Astrocyte of the cerebellum (primary cell): ENCODE measurements at regions of chr12 and their contacts with region 1.

Region 1: GRCh38 chr12:58540480-58541299 is 379.6 kb downstream of the LRIG3 start:
- DNase-seq: peak; percentile 79
- H3K4me3 ChIP-seq: no peak overlapping the region
- CTCF ChIP-seq: peak; percentile 89

Region 2: GRCh38 chr12:58364389-58365086 is 176.2 kb before region 1 on chr12:
- in situ Hi-C with region 1: loop called (anchors 25 kb)
- DNase-seq: peak; percentile 99
- H3K4me3 ChIP-seq: no peak overlapping the region
- CTCF ChIP-seq: no peak

Region 3: GRCh38 chr12:58435647-58436046 is 105.0 kb before region 1 on chr12:
- in situ Hi-C with region 1: no loop called
- DNase-seq: no peak
- H3K4me3 ChIP-seq: no peak overlapping the region
- CTCF ChIP-seq: no peak

Region 4: DNA sequence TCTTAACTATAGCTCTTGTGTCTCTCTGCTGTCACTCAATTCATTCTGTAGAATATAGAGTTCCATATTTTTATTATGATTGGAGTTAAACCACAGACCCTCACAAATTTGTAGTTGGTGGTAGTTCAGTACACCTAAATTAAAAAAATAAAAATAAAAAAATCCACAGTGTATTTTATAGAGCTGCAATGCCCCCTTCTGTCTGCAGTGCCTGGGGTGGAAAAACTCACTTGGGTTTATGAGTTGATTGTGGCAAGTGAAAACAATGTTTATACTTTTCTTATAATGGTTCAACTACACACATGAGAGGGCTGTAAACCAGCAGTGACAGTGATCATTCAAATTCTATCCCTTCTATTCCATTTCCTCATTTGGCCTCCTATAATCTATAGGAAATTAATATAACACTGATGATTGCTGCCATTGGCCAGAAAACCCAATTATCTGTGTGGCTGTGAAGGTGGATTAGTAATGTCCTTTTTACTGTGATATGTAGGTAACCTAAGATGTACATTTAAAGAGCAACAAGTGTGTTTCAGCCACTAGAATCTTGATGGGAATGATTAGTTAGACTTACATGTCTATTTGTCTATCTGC is 546.5 kb after region 1 on chr12:
- in situ Hi-C with region 1: loop called (anchors 25 kb)
- DNase-seq: peak; percentile 19
- H3K4me3 ChIP-seq: no peak overlapping the region
- CTCF ChIP-seq: peak; percentile 71